HEK293 (cell line): ENCODE measurements at regions of chr22 and their contacts with region 1.

Region 1: GRCh38 chr22:37267135-37267587 is 15.1 kb upstream of the CYTH4 start:
- H3K4me3 ChIP-seq: peak overlapping the region; percentile 12; the same call in 1 of the 2 replicates
- H3K27ac ChIP-seq: no peak overlapping the region
- H3K4me1 ChIP-seq: no peaks in the 10 kb centered on the region
- CTCF ChIP-seq: no peak

Region 2: GRCh38 chr22:37303821-37304274 is 36.7 kb after region 1 on chr22:
- CTCF ChIA-PET with region 1: interaction called, 10 read pairs
- POLR2A ChIA-PET with region 1: no interaction called
- H3K4me3 ChIP-seq: no peak overlapping the region
- H3K27ac ChIP-seq: no peak overlapping the region
- H3K4me1 ChIP-seq: 0 out of 2 replicates have a peak, but pooled peaks cover 4% of the 10 kb centered on the region
- CTCF ChIP-seq: no peak